B cell (primary cell): ENCODE measurements at regions of chr1 and their contacts with region 1.

Region 1: DNA sequence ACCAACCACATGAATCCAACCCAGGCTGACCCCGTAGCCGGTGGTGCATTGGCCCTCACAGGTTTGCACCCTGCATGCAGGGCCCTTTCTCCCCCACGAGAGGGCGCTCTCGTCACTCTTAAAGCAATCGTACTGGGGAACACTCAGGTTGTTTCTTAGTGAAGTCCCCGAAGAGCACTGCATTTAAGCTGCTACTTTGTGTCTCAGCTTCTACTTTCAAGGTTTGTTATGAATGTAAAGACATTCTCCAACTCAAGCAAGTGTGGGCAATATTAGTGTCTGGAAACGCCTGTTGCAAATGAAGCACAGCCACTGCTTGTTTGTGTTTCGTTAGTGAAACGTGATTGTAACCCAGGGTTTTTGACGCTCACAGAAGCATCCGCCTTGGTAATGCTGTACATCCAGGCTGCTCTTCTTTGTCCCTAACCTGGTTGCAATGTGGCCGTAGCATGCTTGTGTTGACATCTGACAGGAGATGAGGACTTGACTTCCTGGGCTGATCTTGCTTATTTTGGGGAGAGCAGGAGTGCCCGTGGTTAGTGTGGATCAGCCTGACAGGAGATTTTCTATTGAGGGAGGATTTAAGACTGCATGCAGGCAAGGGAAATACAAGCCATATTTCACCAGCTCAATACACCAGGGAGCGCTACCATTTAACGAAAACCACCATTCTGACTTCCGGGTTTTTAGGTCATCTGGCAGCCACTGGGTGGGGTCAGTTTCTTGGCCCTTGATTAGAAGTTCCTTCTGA is 79.8 kb downstream of the ST6GALNAC3 start:
- DNase-seq: peak; percentile 80
- ATAC-seq: peak; percentile 88
- H3K4me3 ChIP-seq: peak overlapping the region; percentile 39 to 62 (median 58)
- H3K4me3 Mint-ChIP-seq: peak overlapping the region; percentile 92
- H3K27ac ChIP-seq: peak overlapping the region; percentile 2 to 54
- H3K27ac Mint-ChIP-seq: peak overlapping the region; percentile 79
- H3K4me1 ChIP-seq: peaks cover 7 to 8% of the 10 kb centered on the region in 2 donors
- H3K4me1 Mint-ChIP-seq: peaks cover 15% of the 10 kb centered on the region
- H3K27me3 ChIP-seq: no peaks in the 10 kb centered on the region
- H3K27me3 Mint-ChIP-seq: peaks cover 3% of the 10 kb centered on the region
- CTCF ChIP-seq: peak; percentile 98

Region 2: GRCh38 chr1:76330991-76331603 is 176.7 kb after region 1 on chr1:
- CTCF ChIA-PET with region 1: interaction called, 4 read pairs
- POLR2A ChIA-PET with region 1: no interaction called
- intact Hi-C with region 1: loop called (anchors 1 kb)
- DNase-seq: peak; percentile 49
- ATAC-seq: peak; percentile 47
- H3K4me3 ChIP-seq: no peak overlapping the region
- H3K4me3 Mint-ChIP-seq: no peak overlapping the region
- H3K27ac ChIP-seq: no peak overlapping the region
- H3K27ac Mint-ChIP-seq: no peak overlapping the region
- H3K4me1 ChIP-seq: no peaks in the 10 kb centered on the region
- H3K4me1 Mint-ChIP-seq: no peaks in the 10 kb centered on the region
- H3K27me3 ChIP-seq: no peaks in the 10 kb centered on the region
- H3K27me3 Mint-ChIP-seq: no peaks in the 10 kb centered on the region
- CTCF ChIP-seq: peak; percentile 98

Region 3: DNA sequence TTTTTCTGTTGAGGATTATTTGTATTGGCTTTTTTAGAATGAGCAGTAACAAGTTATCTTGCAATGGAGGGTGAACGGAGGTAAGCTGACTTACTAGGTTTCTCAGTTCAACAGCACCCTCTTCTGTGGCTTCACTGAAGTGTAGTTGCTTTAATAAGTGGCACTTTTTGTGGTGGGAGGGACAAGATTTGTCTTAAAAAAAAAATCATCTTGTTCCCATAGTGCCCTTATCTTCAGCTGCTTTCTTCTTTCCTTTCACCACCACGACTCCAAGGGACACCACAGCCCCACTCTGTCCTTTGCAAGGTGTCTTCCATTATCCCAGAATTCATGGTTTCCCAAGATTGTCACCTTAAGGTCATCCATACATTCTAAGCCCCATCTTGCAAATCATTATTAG is 971.9 kb after region 1 on chr1:
- CTCF ChIA-PET with region 1: no interaction called
- POLR2A ChIA-PET with region 1: no interaction called
- intact Hi-C with region 1: loop called (anchors 5 kb)
- DNase-seq: peak; percentile 17
- ATAC-seq: no peak
- H3K4me3 ChIP-seq: no peak overlapping the region
- H3K4me3 Mint-ChIP-seq: no peak overlapping the region
- H3K27ac ChIP-seq: no peak overlapping the region
- H3K27ac Mint-ChIP-seq: no peak overlapping the region
- H3K4me1 ChIP-seq: no peaks in the 10 kb centered on the region
- H3K4me1 Mint-ChIP-seq: no peaks in the 10 kb centered on the region
- H3K27me3 ChIP-seq: no peaks in the 10 kb centered on the region
- H3K27me3 Mint-ChIP-seq: no peaks in the 10 kb centered on the region
- CTCF ChIP-seq: peak; percentile 15